ENCODE measurements at regions of chr3 and their contacts with region 1.

Region 1: DNA sequence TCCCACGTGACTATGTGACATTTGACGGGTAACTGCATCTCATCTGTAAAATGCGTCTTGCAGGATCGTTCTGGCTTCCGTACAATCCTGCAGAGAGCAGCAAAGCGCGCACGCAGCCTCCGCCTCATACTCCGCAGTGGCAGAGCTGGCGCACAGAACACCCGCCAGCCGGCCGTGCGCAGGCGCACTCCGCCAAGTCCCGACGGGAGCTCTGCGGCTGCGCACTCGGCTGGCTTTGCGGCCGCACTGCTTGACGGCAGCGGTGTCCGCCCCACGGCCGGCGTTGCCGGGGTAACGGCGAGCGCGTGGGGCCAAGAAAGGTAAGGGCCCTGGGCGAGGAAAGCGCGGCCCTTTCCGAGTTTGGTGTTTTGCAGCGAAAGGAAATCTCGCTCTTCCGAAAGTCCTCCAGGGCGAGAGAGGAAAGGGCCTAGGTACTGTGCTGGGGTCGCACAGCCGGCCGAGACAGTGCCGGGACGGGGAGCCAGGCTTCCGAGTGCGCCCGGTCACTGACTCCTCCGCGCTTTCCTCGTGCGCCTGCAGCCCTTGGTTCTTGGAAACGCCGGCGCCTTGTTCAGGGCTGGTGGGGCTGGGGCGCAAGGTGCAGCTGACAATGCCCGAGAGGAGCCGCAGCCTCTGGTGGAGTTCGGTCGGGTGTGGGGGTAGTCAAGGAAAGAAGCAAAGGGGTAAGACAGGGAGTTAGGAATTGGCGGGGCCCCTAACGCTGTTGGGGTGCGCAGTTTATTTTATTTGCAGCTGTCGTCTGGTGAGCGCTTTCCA is at the start of gene TSEN2:
- DNase-seq: peak; percentile 92
- H3K4me3 Mint-ChIP-seq: peak within 1 kb of the TSS; percentile 92
- H3K27ac Mint-ChIP-seq: peak within 1 kb of the TSS; percentile 84
- H3K4me1 Mint-ChIP-seq: peaks cover 15% of the 10 kb centered on the region
- H3K27me3 Mint-ChIP-seq: no peaks in the 10 kb centered on the region
- CTCF ChIP-seq: peak; percentile 15
- total RNA-seq, gene TSEN2: 24.5 and 32.3 TPM in 2 replicates

Region 2: DNA sequence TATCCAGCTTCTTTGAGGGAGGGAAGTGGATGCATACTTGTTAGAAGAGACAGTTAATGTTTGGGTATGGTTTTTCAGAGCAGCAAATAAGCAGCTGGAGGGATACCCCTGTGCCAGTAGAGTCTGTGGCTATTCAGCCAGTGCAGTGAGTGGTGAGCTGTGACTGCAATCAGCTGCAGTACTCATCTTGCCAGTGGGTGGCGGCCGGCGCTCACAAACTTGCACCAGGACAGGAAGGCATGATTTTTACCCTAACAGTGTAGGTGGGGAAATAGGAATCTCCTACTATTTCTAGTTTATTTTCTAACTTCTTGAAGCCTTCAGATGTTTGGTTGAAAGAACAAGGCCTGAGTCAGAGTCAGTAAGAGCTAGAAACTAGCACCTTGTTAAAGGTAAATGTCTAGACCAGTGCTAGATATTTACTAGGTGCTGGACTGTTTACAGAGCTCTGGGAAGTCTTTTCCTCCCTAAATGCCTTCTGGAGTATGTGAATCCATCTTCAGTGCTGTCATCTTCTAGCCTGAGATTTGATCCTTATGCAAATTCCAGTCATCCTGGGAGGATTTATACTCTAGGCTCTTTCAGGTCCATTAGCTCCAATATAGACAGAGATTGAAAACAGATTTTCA is 349.2 kb before region 1 on chr3:
- CTCF ChIA-PET with region 1: interaction called, 246 read pairs
- POLR2A ChIA-PET with region 1: interaction called, 10 read pairs
- intact Hi-C with region 1: loop called (anchors 1 kb)
- DNase-seq: peak; percentile 71
- H3K4me3 Mint-ChIP-seq: no peak overlapping the region
- H3K27ac Mint-ChIP-seq: no peak overlapping the region
- H3K4me1 Mint-ChIP-seq: peaks cover 8% of the 10 kb centered on the region
- H3K27me3 Mint-ChIP-seq: peaks cover 47% of the 10 kb centered on the region
- CTCF ChIP-seq: peak; percentile 93

Region 3: GRCh38 chr3:12187448-12188327 is 296.7 kb before region 1 on chr3:
- CTCF ChIA-PET with region 1: interaction called, 13 read pairs
- POLR2A ChIA-PET with region 1: interaction called, 6 read pairs
- intact Hi-C with region 1: no loop called
- DNase-seq: peak; percentile 60
- H3K4me3 Mint-ChIP-seq: peak overlapping the region; percentile 33
- H3K27ac Mint-ChIP-seq: peak overlapping the region; percentile 96
- H3K4me1 Mint-ChIP-seq: peaks cover 31% of the 10 kb centered on the region
- H3K27me3 Mint-ChIP-seq: no peaks in the 10 kb centered on the region
- CTCF ChIP-seq: no peak

Region 4: DNA sequence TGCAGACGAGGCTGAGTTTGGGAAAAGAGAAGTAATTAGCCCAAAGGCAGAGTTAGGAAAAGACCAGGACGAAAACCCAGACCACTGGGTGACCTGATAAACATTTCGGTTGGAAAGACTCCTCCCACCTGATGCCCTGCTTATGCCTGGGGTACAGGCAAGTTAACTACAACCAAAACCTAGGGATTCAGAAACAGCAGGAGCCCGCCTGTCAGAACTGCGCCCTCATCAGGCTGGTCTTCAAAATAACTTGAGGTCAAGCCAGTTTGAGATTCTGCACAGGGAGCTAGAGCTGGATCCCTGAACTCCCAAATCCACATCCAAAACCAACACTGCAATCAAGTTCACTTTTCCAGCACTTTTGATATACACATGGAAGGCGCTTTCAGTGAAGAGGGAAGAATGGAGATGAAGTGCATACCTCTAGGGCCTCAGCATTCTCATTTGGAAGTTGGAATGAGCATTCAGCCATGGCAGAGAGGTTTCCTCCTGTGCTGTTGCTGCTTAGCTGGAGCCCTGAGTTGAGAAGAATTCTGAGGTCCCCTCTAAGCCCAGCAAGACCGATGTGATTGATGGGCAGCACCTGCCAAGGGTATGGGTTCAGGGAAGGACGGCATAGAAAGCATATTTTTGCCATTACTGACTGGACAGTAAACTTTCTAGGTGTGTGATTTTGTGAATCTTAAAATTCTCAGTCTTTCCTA is 11.5 kb after region 1 on chr3:
- CTCF ChIA-PET with region 1: interaction called, 4 read pairs
- POLR2A ChIA-PET with region 1: interaction called, 28 read pairs
- intact Hi-C with region 1: no loop called
- DNase-seq: no peak
- H3K4me3 Mint-ChIP-seq: no peak overlapping the region
- H3K27ac Mint-ChIP-seq: no peak overlapping the region
- H3K4me1 Mint-ChIP-seq: peaks cover 2% of the 10 kb centered on the region
- H3K27me3 Mint-ChIP-seq: no peaks in the 10 kb centered on the region
- CTCF ChIP-seq: no peak

Region 5: DNA sequence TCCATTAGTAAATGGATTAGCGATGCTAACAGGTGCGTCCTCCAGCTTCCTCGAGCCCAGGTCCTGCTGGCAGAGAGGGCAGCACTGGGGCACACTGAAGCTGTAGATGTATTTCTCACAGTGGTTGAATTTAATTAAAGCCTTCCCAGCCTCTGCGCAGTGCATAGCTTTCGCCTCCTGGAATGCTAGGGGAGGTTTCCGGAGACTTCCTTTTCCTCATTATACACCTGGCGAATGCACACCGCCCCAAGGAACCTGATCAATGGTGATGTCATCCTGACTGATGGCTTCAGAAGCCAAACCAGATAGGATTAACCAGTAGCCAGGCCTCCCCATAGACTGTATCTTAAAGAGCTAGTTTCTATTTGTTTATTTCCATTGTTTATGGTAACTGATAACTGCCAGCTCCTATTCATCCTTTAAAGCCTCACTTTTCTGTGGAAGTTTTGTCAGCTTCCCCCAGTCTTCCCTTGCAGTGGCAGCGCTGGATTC is 61.0 kb after region 1 on chr3 and contains the start of gene MKRN2OS:
- CTCF ChIA-PET with region 1: interaction called, 4 read pairs
- POLR2A ChIA-PET with region 1: interaction called, 13 read pairs
- intact Hi-C with region 1: no loop called
- DNase-seq: peak; percentile 86
- H3K4me3 Mint-ChIP-seq: peak within 1 kb of the TSS; percentile 73
- H3K27ac Mint-ChIP-seq: peak within 1 kb of the TSS; percentile 64
- H3K4me1 Mint-ChIP-seq: peaks cover 7% of the 10 kb centered on the region
- H3K27me3 Mint-ChIP-seq: no peaks in the 10 kb centered on the region
- CTCF ChIP-seq: no peak
- total RNA-seq, gene MKRN2OS: 0.37 and 0.47 TPM in 2 replicates

Region 6: DNA sequence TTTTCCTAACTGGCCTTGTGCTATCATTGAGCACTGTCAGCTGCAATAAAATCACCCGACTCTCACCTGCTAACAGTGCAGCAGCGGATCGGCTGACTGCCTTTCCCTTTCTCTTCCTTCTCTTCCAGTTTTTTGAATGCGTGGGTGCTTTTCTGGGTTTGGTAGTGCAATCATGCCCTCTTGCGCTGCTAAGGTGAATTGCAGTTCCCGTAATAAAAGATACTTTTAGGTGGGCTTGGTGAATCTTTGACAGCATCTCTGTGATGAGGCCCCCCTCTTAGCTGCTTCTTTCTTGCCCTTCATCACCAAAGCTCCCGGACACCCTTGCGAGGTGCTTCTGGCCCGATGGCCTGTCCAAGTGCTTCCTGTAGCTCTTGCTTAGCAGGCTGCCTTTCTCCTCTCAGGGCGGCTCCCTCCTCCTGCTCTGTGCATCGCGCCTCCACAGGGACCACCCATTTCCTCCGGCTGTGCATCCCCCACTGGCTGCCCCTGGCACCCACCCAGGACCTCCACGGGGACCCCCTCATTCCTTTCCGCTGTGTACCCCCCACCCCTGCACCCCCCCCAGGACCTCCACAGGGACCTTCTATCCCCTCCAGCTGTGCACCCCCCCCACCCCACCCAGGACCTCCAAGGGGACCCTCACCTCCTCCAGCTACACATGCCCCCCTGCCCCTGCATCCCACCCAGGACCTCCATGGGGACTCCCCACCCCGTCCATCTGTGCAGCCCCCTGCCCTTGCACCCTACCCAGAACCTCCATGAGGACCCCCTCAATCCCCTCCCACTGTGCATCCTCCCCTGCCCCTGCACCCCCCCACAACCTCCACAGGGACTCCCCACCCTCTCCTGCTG is 407.8 kb after region 1 on chr3:
- CTCF ChIA-PET with region 1: interaction called, 4 read pairs
- POLR2A ChIA-PET with region 1: no interaction called
- intact Hi-C with region 1: loop called (anchors 2 kb)
- DNase-seq: peak; percentile 65
- H3K4me3 Mint-ChIP-seq: no peak overlapping the region
- H3K27ac Mint-ChIP-seq: no peak overlapping the region
- H3K4me1 Mint-ChIP-seq: peaks cover 11% of the 10 kb centered on the region
- H3K27me3 Mint-ChIP-seq: peaks cover 31% of the 10 kb centered on the region
- CTCF ChIP-seq: peak; percentile 84